GM13977 (cell line): ENCODE measurements at regions of chr1 and their contacts with region 1.

Region 1: GRCh38 chr1:227469708-227470107 is 93.6 kb upstream of the ZNF678 start:
- DNase-seq: no peak
- CTCF ChIP-seq: no peak

Region 2: GRCh38 chr1:226990133-226990716 is 479.5 kb before region 1 on chr1:
- in situ Hi-C with region 1: no loop called
- DNase-seq: peak; percentile 60
- CTCF ChIP-seq: no peak

Region 3: GRCh38 chr1:227934476-227935313 is 465.0 kb after region 1 on chr1:
- in situ Hi-C with region 1: loop called (anchors 10 kb)
- DNase-seq: no peak
- CTCF ChIP-seq: no peak